KBM-7 (cell line): ENCODE measurements at regions of chr1 and their contacts with region 1.

Region 1: GRCh38 chr1:21896652-21897532 is 40.2 kb downstream of the HSPG2 start:
- DNase-seq: no peak

Region 2: GRCh38 chr1:21391493-21391892 is 505.4 kb before region 1 on chr1:
- in situ Hi-C with region 1: no loop called
- DNase-seq: no peak

Region 3: DNA sequence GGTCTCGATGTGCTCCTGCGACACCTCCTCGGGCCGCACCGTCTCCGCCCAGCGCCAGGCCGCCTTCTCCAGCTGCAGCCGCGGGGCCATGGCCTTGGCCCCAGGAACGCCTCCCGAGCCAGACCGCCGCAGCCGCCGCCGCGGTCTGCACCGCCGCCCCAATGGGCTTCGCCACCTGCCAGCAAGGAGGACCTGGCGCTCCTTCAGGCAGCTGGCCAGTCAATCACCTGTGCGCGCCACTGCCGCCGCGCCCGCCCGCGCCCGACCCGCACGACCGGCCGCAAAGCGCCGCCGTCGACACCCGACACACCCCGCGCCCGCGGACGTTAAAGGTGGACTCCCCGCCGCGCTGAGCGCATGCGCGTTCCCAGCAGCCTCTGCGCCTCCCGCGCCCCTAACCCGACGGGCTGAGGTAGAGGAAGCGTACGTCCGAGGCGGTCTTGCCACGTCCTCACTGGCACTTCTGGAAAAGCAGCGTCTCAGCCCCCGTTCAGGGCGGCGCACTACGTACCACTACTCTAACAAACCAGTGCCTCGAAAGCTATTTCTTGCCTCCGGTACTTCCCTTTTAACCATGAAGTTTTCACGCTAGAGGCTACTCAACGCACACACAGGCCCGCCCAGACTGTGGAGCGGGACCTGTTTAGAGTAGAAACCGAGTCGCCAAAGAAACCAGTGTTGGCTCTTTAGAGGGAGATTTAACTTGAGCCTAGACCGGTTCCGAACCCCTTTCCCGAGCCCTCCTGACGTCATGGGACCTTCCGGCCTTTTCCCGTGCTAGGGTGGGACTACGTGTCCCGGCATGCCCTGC is 113.8 kb before region 1 on chr1 and contains the start of gene USP48:
- in situ Hi-C with region 1: no loop called
- DNase-seq: peak; percentile 94

Region 4: DNA sequence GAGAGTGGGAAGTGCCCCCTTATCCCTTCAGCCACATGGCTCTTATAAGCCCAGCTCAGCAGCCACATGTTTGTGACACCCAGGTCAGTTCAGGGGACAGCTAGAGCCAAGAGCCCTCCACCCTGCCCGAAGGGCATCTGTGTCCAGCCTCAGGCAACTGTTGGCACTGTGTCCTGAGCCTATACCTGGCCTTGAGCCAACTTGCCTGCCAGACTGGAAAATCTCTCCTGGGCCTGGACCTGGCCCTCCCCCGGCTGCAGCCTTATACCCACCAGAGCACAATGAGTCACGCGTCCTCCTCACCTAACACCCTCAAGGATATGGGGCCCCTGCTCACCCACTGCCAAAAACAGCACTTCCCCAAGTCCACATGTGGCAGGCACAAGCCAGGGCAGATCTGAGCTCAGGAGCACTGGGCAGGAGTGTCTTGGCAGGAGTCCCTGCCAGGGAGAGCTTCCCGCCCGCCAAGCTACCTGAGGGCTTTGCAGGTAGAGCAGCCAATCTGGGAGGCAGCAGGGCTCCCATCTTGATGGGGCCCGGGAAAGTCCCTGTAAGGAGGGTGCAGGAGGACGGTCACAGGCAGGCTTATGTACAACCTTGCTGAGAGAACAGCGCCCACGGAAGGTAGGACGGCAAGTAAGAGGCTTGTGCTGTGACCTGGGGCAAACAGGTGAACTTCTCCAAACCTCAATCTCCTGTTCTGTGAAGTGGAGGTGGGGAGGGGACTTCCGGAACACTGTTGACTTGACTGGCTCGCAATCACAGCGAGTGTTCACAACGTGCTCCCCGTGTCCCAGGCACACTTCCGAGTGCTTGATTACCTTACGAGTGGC is 60.0 kb after region 1 on chr1:
- in situ Hi-C with region 1: loop called (anchors 10 kb)
- DNase-seq: peak; percentile 58